ENCODE measurements at regions of chr19 and their contacts with region 1.

Region 1: DNA sequence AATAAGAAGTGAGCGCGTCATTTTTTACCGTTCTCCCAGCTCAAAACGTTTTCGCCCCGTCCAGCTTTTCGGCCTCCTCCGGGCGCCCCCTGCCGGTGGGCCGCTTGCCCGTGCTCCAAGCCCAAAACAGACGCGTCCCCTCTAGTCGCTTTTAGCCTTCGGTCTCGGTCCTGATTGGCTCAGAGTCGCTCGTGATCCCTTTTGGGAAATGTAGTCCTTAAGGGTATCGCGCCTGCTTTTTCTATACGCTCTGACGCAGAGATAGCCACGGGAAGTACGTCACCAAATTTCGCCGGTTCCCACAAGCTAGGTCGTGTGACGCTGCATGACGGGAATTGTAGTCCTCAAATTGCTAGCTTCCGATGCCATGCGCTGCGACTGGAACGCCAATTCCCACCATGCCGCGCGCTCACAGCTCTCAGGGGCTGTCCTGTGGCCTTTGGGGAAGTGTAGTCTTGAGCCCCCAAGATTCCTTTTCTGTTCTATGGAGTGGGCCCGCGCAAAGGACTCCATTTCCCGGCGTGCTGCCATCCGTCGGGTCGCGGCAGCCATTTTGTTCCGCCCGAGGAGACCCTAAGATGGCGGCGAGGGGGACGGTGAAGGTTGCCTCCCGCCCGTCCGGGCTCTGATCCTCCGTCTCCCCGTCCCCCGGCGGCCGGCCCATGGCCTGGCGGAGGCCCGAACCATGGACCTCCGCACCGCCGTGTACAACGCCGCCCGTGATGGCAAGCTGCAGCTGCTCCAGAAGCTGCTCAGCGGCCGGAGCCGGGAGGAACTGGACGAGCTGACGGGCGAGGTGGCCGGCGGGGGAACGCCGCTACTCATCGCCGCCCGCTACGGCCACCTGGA is at the start of gene FEM1A:
- DNase-seq: peak; percentile 100
- ATAC-seq: peak; percentile 97
- H3K4me3 Mint-ChIP-seq: peak within 1 kb of the TSS; percentile 85
- H3K27ac Mint-ChIP-seq: peak within 1 kb of the TSS; percentile 91
- H3K4me1 Mint-ChIP-seq: peaks cover 25% of the 10 kb centered on the region
- H3K27me3 Mint-ChIP-seq: no peaks in the 10 kb centered on the region
- CTCF ChIP-seq: peak; percentile 93
- total RNA-seq, gene FEM1A: 11.4 TPM

Region 2: DNA sequence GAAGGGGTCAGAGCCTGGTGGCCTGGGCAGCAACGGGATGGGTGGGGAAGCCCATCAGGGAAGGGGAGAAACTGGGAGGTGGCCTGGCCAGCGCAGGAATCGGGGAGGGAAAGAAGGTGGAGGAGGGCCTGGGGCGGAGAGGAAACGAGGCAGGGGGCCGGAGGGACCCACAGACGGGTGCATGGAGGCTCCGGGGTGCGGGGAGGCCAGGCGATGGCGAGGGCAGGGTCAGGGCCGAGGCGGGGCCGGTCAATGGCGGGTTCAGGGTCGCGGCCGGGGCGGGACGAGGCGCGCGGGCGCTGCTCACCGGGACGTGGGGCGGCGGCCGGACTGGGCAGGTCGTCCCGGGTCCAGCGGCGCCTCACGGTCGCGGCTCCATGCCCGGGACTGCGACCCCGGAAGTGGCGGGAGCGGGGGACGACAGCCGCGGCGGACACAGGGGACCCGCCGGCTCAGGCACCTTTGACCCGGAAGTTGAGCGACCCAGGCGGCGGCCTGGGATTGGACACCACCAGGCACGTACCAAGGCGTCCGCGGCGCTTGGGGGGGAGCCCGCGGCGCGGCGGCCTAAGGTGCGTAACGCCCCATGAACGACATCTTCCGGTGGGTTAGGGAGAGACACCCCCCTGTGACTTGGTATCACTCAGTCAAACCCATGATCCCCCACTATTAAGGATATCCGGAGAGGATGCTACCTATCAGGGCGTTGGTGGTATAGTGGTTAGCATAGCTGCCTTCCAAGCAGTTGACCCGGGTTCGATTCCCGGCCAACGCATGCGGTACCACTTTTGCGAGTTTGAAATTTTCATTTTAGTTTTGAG is 67.8 kb before region 1 on chr19 and contains the start of gene DPP9:
- CTCF ChIA-PET with region 1: interaction called, 106 read pairs
- POLR2A ChIA-PET with region 1: interaction called, 11 read pairs
- intact Hi-C with region 1: no loop called
- DNase-seq: peak; percentile 98
- ATAC-seq: peak; percentile 97
- H3K4me3 Mint-ChIP-seq: peak within 1 kb of the TSS; percentile 99
- H3K27ac Mint-ChIP-seq: peak within 1 kb of the TSS; percentile 96
- H3K4me1 Mint-ChIP-seq: peaks cover 23% of the 10 kb centered on the region
- H3K27me3 Mint-ChIP-seq: peaks cover 5% of the 10 kb centered on the region
- CTCF ChIP-seq: no peak
- total RNA-seq, gene DPP9: 60.4 to 64.0 TPM

Region 3: DNA sequence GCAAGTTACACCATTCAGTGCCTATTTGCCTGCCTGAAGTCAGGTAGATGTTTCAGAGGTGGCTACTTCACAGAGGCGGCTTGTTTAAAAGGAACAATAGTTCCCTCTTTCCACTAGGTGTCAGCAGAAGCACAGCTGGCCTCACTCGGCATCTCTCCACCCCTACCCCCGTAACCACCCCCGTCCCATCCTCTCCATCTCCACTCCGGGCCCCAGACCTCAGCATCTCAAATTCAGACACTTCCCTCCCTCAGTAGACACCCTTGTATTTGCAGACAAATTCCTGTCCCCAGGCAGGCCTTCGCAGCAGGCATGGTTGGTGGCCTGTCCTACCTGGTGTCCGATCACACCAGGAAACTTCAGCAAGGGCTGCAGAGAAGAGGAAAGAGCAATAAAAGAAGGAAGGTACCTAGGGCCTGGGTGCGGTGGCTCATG is 58.7 kb before region 1 on chr19:
- CTCF ChIA-PET with region 1: interaction called, 106 read pairs
- POLR2A ChIA-PET with region 1: interaction called, 5 read pairs
- intact Hi-C with region 1: loop called (anchors 2 kb)
- DNase-seq: peak; percentile 67
- ATAC-seq: peak; percentile 90
- H3K4me3 Mint-ChIP-seq: peak overlapping the region; percentile 9
- H3K27ac Mint-ChIP-seq: no peak overlapping the region
- H3K4me1 Mint-ChIP-seq: peaks cover 5% of the 10 kb centered on the region
- H3K27me3 Mint-ChIP-seq: no peaks in the 10 kb centered on the region
- CTCF ChIP-seq: peak; percentile 84

Region 4: DNA sequence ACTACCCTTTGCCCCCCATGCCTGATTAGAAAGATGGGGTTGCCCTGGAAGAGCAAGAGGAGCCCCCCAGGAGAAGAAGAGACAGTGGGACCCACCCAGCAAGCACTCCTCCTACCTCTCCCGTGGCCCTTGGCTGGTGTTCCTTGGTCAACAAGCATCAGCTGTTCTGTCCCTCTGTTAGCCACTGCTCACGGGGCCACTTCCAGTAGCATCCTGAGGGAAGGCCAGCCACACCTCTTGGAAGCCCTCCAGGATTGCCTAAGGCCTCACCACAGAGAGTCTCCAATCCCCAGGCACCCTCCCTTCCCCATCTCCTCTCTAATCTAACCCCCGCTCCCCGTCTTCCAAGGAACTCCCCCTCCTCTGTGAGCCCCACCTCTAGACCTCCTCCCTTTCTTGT is 52.7 kb before region 1 on chr19:
- CTCF ChIA-PET with region 1: interaction called, 106 read pairs
- POLR2A ChIA-PET with region 1: interaction called, 5 read pairs
- intact Hi-C with region 1: loop called (anchors 2 kb)
- DNase-seq: no peak
- ATAC-seq: no peak
- H3K4me3 Mint-ChIP-seq: no peak overlapping the region
- H3K27ac Mint-ChIP-seq: no peak overlapping the region
- H3K4me1 Mint-ChIP-seq: no peaks in the 10 kb centered on the region
- H3K27me3 Mint-ChIP-seq: peaks cover 10% of the 10 kb centered on the region
- CTCF ChIP-seq: no peak

Region 5: DNA sequence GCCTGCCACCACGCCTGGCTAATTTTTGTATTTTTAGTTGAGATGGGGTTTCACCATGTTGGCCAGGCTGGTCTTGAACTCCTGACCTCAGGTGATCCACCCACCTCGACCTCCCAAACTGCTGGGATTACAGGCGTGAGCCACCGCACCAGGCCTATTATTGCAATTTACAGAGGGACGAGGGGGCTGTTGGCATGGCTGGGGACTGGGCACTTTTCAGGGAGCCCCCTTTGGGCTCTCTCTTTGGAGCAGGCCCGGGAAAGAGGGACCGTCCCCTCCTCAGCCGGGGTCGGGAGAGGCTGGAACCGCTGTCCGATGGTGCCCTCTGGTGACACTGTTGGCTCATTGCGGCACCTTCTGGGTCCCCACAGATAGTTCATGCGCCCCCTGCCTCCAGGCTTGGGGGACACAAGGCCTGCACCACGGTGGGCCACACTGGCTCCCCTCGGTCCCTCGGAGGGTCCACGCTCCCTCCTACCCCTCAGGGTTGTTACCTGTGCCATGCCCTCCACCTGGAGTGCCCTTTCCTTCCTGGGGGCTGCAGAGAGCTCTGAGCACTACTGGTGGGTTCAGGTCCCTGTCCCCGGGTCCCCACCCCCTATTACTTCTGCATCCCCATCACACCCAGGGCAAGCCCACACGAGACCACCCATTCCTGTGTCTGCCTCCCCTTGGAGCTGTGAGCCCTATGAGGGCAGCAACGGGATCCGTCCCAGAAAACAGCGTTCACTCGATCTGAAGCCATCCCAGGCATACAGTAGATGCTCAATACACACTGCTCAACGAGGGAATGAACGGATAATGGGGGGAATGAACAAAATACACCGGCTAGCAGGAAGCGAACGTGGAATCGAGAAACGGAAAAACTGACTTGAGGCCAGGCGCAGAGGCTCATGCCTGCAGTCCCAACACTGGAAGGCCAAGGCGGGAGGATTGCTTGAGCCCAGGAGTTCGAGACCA is 12.6 kb after region 1 on chr19:
- CTCF ChIA-PET with region 1: interaction called, 28 read pairs
- POLR2A ChIA-PET with region 1: no interaction called
- intact Hi-C with region 1: no loop called
- DNase-seq: peak; percentile 83
- ATAC-seq: peak; percentile 99
- H3K4me3 Mint-ChIP-seq: peak overlapping the region; percentile 15
- H3K27ac Mint-ChIP-seq: no peak overlapping the region
- H3K4me1 Mint-ChIP-seq: no peaks in the 10 kb centered on the region
- H3K27me3 Mint-ChIP-seq: no peaks in the 10 kb centered on the region
- CTCF ChIP-seq: peak; percentile 99

Measured in activated CD8-positive, alpha-beta T cell treated with anti-CD3 and anti-CD28 coated beads for 36 hours (primary cell).